K562 (cell line): ENCODE measurements at regions of chr1 and their contacts with region 1.

Region 1: DNA sequence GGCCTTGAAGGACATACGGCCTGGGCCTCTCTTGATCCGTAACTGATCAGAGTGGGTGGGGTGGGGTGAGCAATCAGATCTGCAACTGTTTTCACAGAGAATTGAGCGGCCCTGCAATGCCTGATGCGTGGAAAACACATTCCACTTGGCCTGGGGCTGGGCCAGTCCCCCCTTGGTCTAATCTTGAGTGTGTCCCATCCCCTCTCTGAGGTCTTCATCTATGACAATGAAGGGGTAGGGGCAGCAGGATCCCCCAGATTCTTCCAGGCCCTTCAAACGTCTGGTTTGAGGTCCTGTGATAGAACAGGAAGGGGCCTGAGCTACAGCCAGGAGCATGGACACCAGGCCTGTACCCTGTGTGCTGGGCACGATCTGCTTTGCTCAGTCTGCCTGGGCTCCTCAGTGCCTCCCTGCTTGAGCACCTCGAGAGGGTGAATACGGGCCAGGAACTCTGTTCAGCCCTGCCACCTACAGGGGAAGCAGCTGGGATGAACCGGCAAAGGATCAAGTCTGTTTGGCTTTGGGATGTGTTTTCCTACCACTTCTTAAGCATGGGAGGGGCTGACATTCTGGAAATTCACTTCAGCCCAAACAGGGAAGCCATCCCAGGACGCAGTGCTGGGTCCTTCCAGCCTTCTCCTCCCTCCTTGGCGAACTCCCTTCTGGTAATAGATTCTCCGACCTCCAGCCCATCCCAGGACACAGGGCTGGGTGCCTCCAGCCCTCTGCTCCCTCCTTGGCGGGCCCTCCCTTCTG is 56.0 kb upstream of the SELENON start:
- DNase-seq: peak in 1 of 4 experiments; percentile 27
- ATAC-seq: peak; percentile 67
- H3K4me3 ChIP-seq: no peak overlapping the region
- H3K27ac ChIP-seq: no peak overlapping the region
- H3K4me1 ChIP-seq: peaks cover 0 to 6% of the 10 kb centered on the region in 2 experiments; a peak in 1 of 5 replicates
- H3K27me3 ChIP-seq: peaks cover 76 to 94% of the 10 kb centered on the region in 2 experiments
- CTCF ChIP-seq: peak; percentile 28 to 52 (median 30); a peak in 4 of 6 replicates
- EP300 ChIP-seq: no peak
- POLR2A ChIP-seq: no peak
- RAD21 ChIP-seq: peak in 1 of 2 experiments; percentile 55; a peak in 2 of 4 replicates

Region 2: DNA sequence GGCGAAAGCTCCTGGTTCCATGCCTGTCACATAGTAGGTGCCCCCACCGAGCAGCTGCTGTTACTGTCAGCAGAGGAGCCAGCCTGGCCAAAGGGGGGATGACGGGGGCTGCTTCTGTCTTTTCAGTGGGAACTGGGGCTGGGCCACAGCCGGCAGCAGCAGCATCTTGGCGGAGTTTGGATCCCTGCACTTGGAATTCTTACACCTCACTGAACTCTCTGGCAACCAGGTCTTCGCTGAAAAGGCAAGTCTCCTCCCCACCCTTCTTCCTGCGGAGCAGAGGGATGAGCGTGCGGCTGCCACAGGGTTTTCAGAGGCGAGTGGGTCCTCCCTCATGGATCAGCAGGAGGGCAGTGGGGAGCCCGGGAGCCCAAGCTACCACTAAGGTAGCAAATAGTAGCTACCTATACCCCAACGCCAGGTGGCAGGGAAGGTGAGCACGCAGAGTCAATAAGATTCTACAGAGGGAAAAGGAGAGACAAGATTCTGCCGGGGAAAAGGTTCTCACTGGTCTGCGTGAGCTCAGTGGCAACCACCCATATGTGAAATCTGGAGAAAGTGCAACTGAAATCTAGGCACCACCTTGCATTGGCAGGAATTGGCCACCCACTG is 14.6 kb after region 1 on chr1:
- CTCF ChIA-PET with region 1: no interaction called
- POLR2A ChIA-PET with region 1: interaction called, 10 read pairs
- in situ Hi-C with region 1: no loop called
- intact Hi-C with region 1: no loop called
- DNase-seq: no peak
- ATAC-seq: peak; percentile 41; the same call in 2 of the 3 replicates
- H3K4me3 ChIP-seq: no peak overlapping the region
- H3K27ac ChIP-seq: no peak overlapping the region
- H3K4me1 ChIP-seq: peaks cover 10 to 12% of the 10 kb centered on the region in 2 experiments
- H3K27me3 ChIP-seq: peaks cover 48 to 72% of the 10 kb centered on the region in 2 experiments
- CTCF ChIP-seq: peak in 2 of 3 experiments; percentile 19 to 27; a peak in 3 of 6 replicates
- EP300 ChIP-seq: no peak
- POLR2A ChIP-seq: no peak
- RAD21 ChIP-seq: peak in 1 of 2 experiments; percentile 36; a peak in 2 of 4 replicates

Region 3: DNA sequence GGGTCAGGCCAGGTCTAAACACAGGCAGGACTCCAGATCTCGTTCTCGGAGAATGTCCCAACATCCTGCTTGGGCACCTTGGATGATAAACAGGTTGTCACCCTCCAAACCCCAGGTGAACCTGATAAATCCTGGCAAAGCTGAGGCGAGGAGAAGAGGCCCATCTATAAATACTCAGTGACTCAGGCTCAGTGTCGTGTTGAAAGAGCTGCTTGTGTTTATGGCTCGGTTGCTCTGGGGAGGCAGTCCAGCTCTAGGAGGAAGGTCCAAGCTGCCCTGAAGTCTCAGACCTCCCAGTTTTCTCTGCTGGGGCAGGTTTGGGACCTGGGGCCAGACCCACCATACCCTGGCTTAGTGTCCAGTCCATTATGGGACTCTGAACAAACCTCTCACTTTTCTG is 339.2 kb after region 1 on chr1:
- CTCF ChIA-PET with region 1: no interaction called
- POLR2A ChIA-PET with region 1: no interaction called
- in situ Hi-C with region 1: no loop called
- intact Hi-C with region 1: no loop called
- DNase-seq: no peak
- ATAC-seq: peak; percentile 11; the same call in 1 of the 3 replicates
- H3K4me3 ChIP-seq: no peak overlapping the region
- H3K27ac ChIP-seq: no peak overlapping the region
- H3K4me1 ChIP-seq: peaks cover 16 to 42% of the 10 kb centered on the region in 2 experiments
- H3K27me3 ChIP-seq: no peaks in the 10 kb centered on the region
- CTCF ChIP-seq: no peak
- EP300 ChIP-seq: no peak
- POLR2A ChIP-seq: no peak
- RAD21 ChIP-seq: no peak